Mammary epithelial cell (primary cell): ENCODE measurements at regions of chr1 and their contacts with region 1.

Region 1: GRCh38 chr1:153670859-153671627 is at the start of gene ILF2:
- DNase-seq: peak; percentile 99
- H3K4me3 ChIP-seq: peak within 1 kb of the TSS; percentile 66 to 96 (median 82)
- H3K27ac ChIP-seq: peak within 1 kb of the TSS; percentile 81
- H3K4me1 ChIP-seq: peaks cover 15% of the 10 kb centered on the region
- H3K27me3 ChIP-seq: no peaks in the 10 kb centered on the region
- CTCF ChIP-seq: peak in 1 of 2 donors; percentile 35
- total RNA-seq, gene ILF2: 151 to 158 TPM

Region 2: GRCh38 chr1:153375511-153375910 is 295.5 kb before region 1 on chr1 and contains the start of gene S100A12:
- CTCF ChIA-PET with region 1: no interaction called
- dilution Hi-C with region 1: no loop called
- in situ Hi-C with region 1: no loop called
- intact Hi-C with region 1: no loop called
- DNase-seq: peak; percentile 94
- H3K4me3 ChIP-seq: no peak within 1 kb of the TSS
- H3K27ac ChIP-seq: no peak within 1 kb of the TSS
- H3K4me1 ChIP-seq: peaks cover 33% of the 10 kb centered on the region
- H3K27me3 ChIP-seq: no peaks in the 10 kb centered on the region
- CTCF ChIP-seq: no peak
- total RNA-seq, gene S100A12: 0.66 TPM in 1 of 2 donors, not detected in the other

Region 3: GRCh38 chr1:153532769-153533599 is 138.1 kb before region 1 on chr1:
- CTCF ChIA-PET with region 1: no interaction called
- dilution Hi-C with region 1: no loop called
- in situ Hi-C with region 1: no loop called
- intact Hi-C with region 1: loop called (anchors 1 kb)
- DNase-seq: peak; percentile 76
- H3K4me3 ChIP-seq: peak overlapping the region in 2 of 3 experiments; percentile 18 to 73
- H3K27ac ChIP-seq: peak overlapping the region; percentile 73
- H3K4me1 ChIP-seq: peaks cover 44% of the 10 kb centered on the region
- H3K27me3 ChIP-seq: no peaks in the 10 kb centered on the region
- CTCF ChIP-seq: peak; percentile 56 to 78

Region 4: DNA sequence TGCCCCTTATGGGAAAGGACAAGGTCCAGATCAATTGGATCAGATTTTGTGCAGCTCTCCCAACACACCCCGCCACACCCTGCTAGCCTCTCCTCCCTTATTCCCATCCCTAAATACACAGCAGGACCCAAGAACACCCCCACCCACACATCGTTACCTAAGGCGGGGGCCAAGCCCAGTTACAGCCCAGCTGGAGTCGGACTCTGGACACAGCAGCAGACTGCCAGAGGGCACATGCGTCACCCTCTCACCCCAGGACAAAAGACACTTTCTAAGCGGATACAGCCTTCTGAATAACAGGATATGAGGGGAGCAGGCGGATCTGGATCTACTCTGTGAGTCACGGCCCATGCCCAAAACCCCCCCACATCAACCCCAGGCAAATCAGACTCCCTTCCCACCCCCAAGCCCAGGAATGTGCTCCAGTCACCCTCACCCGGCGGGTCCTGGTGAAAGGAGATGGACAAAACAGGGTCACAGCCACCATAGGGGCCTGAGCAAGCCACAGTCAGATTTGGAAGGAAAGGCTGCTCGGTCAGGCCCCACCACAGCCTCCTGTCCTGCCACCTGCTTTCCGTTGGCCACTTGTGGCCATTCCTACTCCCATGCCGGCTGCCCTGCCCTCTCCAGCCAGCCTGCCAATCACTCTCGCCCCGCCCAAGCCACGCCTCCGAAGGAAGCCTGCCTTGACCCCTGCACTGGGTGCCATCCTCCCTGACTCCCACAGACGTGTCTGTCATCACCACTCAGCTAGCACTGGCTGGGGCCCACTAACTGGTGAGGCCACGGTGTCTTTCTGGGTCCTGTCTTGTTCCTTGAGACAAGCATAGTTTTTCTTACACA is 62.1 kb before region 1 on chr1:
- CTCF ChIA-PET with region 1: no interaction called
- dilution Hi-C with region 1: no loop called
- in situ Hi-C with region 1: no loop called
- intact Hi-C with region 1: loop called (anchors 1 kb)
- DNase-seq: peak; percentile 98
- H3K4me3 ChIP-seq: peak overlapping the region; percentile 37 to 70 (median 53)
- H3K27ac ChIP-seq: peak overlapping the region; percentile 83
- H3K4me1 ChIP-seq: peaks cover 34% of the 10 kb centered on the region
- H3K27me3 ChIP-seq: no peaks in the 10 kb centered on the region
- CTCF ChIP-seq: no peak

Region 5: GRCh38 chr1:153626922-153627796 is 43.9 kb before region 1 on chr1 and contains the start of gene S100A13:
- CTCF ChIA-PET with region 1: no interaction called
- dilution Hi-C with region 1: no loop called
- in situ Hi-C with region 1: no loop called
- intact Hi-C with region 1: loop called (anchors 2 kb)
- DNase-seq: peak; percentile 93
- H3K4me3 ChIP-seq: peak within 1 kb of the TSS; percentile 57 to 69 (median 64)
- H3K27ac ChIP-seq: peak within 1 kb of the TSS; percentile 79
- H3K4me1 ChIP-seq: peaks cover 22% of the 10 kb centered on the region
- H3K27me3 ChIP-seq: no peaks in the 10 kb centered on the region
- CTCF ChIP-seq: peak; percentile 65 to 76
- total RNA-seq, gene S100A13: 72.0 to 213 TPM

Region 6: DNA sequence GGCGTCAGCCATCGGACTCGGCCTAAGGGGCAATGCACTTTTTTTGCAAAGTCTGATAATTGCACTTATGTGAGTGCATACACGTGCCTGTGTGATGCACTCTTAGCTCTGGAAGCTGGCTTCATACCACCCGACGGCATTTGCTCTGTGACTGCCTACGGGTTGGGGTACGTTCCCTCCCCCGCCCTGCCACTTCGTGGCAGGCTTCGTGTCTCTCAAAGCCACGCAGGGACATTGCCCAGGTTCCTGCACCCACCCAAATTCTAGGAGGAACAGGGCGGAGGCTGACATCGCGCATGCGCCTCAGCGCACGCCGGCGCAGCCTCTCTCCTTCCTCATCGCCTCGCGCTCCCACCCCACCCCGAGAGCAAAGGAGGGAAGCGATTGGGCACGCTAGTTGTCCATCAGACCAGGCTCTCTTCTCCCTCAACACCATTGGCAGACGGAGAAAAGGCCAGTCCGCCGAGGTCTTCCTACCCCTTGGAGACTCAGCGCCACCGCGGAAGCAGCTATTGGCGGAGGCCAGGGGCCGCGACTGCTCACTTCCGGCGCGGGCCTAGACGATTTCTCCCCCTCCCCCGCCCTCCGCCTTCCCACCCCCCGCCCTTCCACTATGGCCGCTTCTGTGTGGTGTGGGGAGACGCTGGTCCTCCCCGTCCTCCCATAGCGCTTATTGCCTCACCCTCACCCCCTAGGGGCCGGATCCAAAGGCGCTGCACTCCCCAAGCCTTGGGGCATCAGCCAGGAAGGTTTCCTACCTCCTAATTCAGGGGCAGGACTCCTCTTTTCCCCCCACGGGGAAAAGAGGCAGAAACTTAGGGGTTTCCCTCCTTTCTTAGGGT is 56.6 kb after region 1 on chr1 and contains the start of gene INTS3:
- CTCF ChIA-PET with region 1: no interaction called
- dilution Hi-C with region 1: no loop called
- in situ Hi-C with region 1: no loop called
- intact Hi-C with region 1: loop called (anchors 1 kb)
- DNase-seq: peak; percentile 100
- H3K4me3 ChIP-seq: peak within 1 kb of the TSS; percentile 80 to 95 (median 87)
- H3K27ac ChIP-seq: peak within 1 kb of the TSS; percentile 83
- H3K4me1 ChIP-seq: peaks cover 13% of the 10 kb centered on the region
- H3K27me3 ChIP-seq: no peaks in the 10 kb centered on the region
- CTCF ChIP-seq: peak in 1 of 2 donors; percentile 18
- total RNA-seq, gene INTS3: 32.8 to 45.6 TPM

Region 7: DNA sequence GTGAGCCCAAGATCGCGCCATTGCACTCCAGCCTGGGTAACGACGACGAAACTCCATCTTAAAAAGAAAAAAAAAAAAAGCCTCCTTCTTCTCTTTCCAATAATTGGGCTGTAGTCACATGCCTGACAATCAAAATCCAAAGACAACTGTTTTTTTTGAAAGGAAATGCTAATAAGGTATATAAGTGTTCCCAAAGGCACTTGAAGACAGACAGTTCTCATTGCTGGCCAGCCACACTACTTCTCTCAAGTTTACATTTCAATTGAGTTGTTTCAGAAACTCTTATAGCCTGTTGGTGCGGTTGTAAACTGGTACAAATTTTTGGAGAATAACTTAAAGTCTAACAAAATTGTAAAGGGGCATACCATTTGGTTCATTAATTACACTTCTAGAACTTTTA is 228.5 kb after region 1 on chr1:
- CTCF ChIA-PET with region 1: no interaction called
- dilution Hi-C with region 1: no loop called
- in situ Hi-C with region 1: no loop called
- intact Hi-C with region 1: no loop called
- DNase-seq: no peak
- H3K4me3 ChIP-seq: no peak overlapping the region
- H3K27ac ChIP-seq: no peak overlapping the region
- H3K4me1 ChIP-seq: peaks cover 5% of the 10 kb centered on the region
- H3K27me3 ChIP-seq: no peaks in the 10 kb centered on the region
- CTCF ChIP-seq: no peak

Region 8: GRCh38 chr1:153977250-153978240 is 306.5 kb after region 1 on chr1 and contains the start of gene JTB:
- CTCF ChIA-PET with region 1: interaction called, 7 read pairs
- dilution Hi-C with region 1: no loop called
- in situ Hi-C with region 1: loop called in 1 of 2 experiments (anchors 5 kb)
- intact Hi-C with region 1: no loop called
- DNase-seq: peak; percentile 77
- H3K4me3 ChIP-seq: peak within 1 kb of the TSS; percentile 51 to 93 (median 71)
- H3K27ac ChIP-seq: peak within 1 kb of the TSS; percentile 51
- H3K4me1 ChIP-seq: peaks cover 10% of the 10 kb centered on the region
- H3K27me3 ChIP-seq: no peaks in the 10 kb centered on the region
- CTCF ChIP-seq: no peak
- total RNA-seq, gene JTB: 58.7 to 60.5 TPM

Region 9: GRCh38 chr1:154324669-154325582 is 653.9 kb after region 1 on chr1 and contains the start of gene ATP8B2:
- CTCF ChIA-PET with region 1: no interaction called
- dilution Hi-C with region 1: no loop called
- in situ Hi-C with region 1: no loop called
- intact Hi-C with region 1: loop called (anchors 10 kb)
- DNase-seq: peak; percentile 53
- H3K4me3 ChIP-seq: peak within 1 kb of the TSS; percentile 55 to 65 (median 63)
- H3K27ac ChIP-seq: no peak within 1 kb of the TSS
- H3K4me1 ChIP-seq: peaks cover 29% of the 10 kb centered on the region
- H3K27me3 ChIP-seq: no peaks in the 10 kb centered on the region
- CTCF ChIP-seq: peak; percentile 79 to 92
- total RNA-seq, gene ATP8B2: 11.5 TPM